ENCODE measurements at regions of chr2 and their contacts with region 1.

Region 1: GRCh38 chr2:7203055-7203467 is 285.8 kb downstream of the RNF144A start:
- DNase-seq: peak in 2 of 3 donors; percentile 26 to 53
- ATAC-seq: peak; percentile 55
- H3K4me3 ChIP-seq: no peak overlapping the region
- H3K4me1 ChIP-seq: no peaks in the 10 kb centered on the region
- CTCF ChIP-seq: peak; percentile 67

Region 2: DNA sequence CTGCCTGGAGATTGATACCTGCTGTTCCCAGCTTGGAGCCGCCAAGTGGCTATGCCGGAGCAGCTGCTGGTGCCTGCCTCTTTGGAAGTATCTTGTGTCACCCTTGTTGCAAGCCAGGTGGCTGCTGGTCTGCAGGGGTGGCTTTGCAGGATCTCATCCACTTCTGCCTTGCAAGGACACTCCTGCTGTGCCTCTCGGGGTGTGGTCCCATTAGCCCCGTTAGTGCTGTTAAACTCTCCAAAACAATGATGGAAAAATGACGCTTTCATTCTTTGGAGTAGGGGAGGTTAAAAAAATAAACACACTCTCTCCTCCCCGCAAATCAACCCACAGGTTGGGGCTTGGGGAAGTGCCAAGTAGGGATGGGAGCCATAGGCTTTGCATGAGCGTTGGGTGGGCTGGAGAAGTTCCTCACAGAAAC is 67.0 kb after region 1 on chr2:
- intact Hi-C with region 1: no loop called
- DNase-seq: no peak
- ATAC-seq: no peak
- H3K4me3 ChIP-seq: no peak overlapping the region
- H3K4me1 ChIP-seq: no peaks in the 10 kb centered on the region
- CTCF ChIP-seq: no peak

Region 3: DNA sequence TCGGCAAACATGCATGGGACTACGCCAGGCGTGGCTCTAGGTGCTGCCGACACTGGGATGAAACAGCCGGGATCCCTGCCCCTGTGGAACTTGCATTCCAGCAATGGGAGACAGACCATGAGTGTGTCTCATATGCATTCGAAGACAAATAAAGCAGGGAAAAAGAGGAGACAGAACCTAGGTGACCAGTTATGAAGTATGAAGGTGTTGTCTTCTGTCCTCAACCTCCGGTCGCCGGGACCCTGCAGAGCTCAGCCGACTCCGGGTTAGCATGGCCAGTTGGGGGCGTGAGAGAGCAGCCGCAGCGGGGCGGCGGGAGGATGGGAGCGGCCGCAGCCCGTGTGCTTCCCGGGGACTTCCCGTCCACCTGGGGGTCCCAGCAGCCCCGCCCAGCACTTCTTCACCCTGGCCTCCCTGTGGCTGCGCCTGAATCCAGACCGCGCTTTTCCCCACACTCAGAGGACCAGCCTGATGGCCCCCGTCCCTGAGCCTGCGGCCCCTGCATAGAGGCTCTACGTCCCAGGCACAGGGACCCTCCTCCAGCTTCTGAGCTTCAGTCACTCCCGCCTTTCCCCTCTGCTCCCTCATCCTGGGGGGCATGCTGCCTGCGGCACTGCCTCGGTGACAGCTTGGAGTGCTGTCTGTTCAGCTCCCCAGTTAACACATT is 1490.2 kb after region 1 on chr2:
- intact Hi-C with region 1: loop called in 1 of 2 experiments (anchors 10 kb)
- DNase-seq: peak; percentile 63 to 83 (median 75)
- ATAC-seq: peak; percentile 95
- H3K4me3 ChIP-seq: no peak overlapping the region
- H3K4me1 ChIP-seq: peaks cover 7% of the 10 kb centered on the region
- CTCF ChIP-seq: peak; percentile 68

Measured in mucosa of descending colon (tissue), 3 donors.